Activated CD8-positive, alpha-beta memory T cell treated with anti-CD3 and anti-CD28 coated beads, Interleukin-2, amount 10 ng/mL, durations not matched to agents 7 days and 5 days (primary cell): ENCODE measurements at regions of chr4 and their contacts with region 1.

Region 1: DNA sequence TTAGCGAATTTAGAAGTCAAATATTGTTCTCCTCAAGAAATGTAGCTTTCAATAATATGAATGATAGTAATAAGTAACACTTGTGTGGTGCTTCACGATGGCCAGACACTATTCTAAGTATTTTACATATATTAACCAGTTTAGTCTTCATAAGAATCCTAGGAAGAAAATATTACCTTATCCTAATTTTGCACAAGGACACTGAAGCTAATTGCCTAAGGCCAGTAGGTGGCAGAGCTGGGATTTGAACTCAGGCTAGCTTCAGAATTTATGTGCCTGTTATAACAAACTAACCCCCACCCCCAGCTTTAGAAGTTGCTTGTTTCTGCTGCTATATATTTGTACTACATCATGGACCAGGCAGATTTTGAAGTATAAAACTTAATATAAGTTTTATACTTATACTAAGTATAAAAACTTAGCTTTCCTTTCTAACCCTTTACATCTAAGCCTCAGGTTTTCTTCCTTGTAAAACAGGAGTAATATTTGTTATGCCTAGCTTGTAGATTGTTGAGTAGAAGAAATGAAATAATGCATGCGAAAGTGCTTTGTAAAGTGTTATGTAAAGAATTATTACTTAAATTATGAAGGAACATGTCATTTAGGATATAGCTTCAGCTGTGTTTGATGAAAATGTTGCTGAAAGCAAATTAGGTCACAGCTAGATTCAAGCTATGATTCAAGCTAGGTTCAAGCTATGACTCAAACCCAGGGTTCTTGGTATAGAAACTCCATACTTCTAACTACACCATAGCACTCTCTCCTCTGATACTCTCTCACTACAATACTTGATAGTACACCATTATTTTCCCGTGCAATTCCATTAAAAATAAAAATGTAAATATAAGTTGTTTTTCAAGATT is 4.2 kb upstream of the CDS1 start:
- DNase-seq: no peak
- ATAC-seq: no peak
- H3K4me3 Mint-ChIP-seq: no peak overlapping the region
- H3K27ac Mint-ChIP-seq: no peak overlapping the region
- H3K4me1 Mint-ChIP-seq: peaks cover 17% of the 10 kb centered on the region
- H3K27me3 Mint-ChIP-seq: peaks cover 32% of the 10 kb centered on the region

Region 2: DNA sequence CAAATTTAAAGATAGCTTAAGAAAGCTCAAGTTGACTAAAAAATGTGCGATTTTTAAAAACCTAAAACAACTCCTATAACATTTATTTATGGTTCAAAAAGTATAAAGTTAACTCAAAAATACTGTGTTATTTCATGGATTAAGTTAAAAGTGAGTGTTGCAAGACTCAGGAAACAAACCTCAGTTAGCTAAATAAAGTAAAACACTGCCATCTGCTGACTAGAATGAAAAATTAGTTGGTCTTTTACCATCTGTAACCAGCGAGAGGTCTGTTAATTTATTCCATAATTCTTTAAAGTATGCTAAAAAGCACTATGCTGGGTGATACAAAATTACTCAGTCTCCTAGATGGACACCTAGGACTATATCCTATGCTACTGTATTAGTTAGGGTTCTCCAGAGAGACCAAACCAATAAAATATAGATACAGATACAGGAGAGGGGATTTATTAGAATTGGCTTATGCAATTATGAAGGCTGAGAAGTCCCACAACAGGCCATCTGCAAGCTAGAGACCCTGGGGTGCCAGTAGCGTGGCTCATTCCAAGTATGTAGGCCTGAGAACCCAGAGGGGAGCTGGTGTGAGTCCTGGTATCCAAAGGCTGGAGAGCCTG is 392.7 kb after region 1 on chr4:
- CTCF ChIA-PET with region 1: interaction called, 13 read pairs
- DNase-seq: no peak
- ATAC-seq: no peak
- H3K4me3 Mint-ChIP-seq: no peak overlapping the region
- H3K27ac Mint-ChIP-seq: no peak overlapping the region
- H3K4me1 Mint-ChIP-seq: peaks cover 3% of the 10 kb centered on the region
- H3K27me3 Mint-ChIP-seq: peaks cover 25% of the 10 kb centered on the region